Naive thymus-derived CD4-positive, alpha-beta T cell (primary cell): ENCODE measurements at regions of chr5 and their contacts with region 1.

Region 1: DNA sequence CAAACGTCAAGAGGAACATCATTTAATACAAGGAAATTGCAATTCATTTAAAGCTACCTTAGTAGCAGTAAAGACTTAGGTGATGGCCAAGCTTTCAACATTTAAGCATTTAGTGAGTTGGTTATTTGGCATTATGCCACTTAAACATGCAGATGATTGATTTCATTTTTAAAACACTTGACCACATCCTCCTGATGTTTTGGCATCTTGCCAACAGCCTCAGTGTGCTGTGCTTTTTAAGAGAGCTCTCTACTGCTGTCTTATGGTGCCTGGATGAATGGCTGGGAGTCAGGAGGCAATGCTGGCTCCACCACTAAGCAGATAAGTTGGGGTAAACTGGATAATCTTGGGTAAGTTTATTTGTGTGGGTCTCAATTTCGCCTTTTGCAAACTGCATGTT is 364.5 kb downstream of the MAN2A1 start:
- DNase-seq: peak; percentile 17 to 93 (median 85)
- ATAC-seq: peak; percentile 89
- H3K4me3 ChIP-seq: peak overlapping the region; percentile 6
- H3K4me3 Mint-ChIP-seq: peak overlapping the region; percentile 50 to 86 (median 65)
- H3K27ac ChIP-seq: peak overlapping the region; percentile 63
- H3K27ac Mint-ChIP-seq: peak overlapping the region; percentile 77 to 96 (median 90)
- H3K4me1 ChIP-seq: peaks cover 21 to 35% of the 10 kb centered on the region in 2 donors
- H3K4me1 Mint-ChIP-seq: peaks cover 10 to 50% (median 35%) of the 10 kb centered on the region in 7 donors
- H3K27me3 ChIP-seq: no peaks in the 10 kb centered on the region
- H3K27me3 Mint-ChIP-seq: no peaks in the 10 kb centered on the region

Region 2: DNA sequence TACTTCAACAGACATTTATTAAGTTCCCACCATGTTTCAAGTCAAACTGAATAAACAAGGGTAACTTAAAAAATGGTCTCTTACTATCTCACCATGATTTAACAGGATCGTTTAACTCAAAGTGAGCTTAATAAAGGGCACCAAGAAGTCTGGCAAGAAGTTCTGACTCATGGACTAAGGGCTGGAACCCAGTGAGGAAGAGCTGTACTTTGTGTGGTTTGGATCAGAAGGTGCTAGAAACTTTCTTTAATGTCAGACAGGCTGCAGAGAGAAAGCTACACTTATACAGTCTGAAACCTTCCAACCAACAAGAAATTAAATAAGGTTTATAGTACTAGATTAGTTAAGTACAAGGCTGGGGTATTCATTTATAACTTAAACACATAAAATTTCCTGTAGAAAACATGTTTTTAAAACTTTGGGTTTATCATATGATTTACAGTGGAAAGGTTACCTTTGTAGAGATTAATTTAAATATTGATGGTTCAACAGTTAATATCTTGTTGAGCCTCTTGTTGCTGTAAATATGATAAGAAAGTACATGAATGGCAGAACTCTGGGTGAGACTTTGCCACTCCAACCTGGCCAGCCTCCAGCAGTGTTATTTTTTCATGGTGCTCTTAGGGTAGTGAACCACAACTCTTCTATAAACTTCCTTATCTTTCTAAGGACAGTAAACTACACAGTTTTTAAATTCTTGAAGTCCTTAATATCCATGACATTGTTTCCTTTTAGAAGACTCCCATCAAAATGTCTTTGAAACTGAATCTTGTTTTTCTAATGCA is 201.7 kb before region 1 on chr5:
- CTCF ChIA-PET with region 1: interaction called, 3 read pairs
- POLR2A ChIA-PET with region 1: interaction called, 6 read pairs
- intact Hi-C with region 1: loop called (anchors 2 kb)
- DNase-seq: no peak
- ATAC-seq: no peak
- H3K4me3 ChIP-seq: no peak overlapping the region
- H3K4me3 Mint-ChIP-seq: peak overlapping the region in 8 of 10 donors; percentile 9 to 75 (median 23)
- H3K27ac ChIP-seq: no peak overlapping the region
- H3K27ac Mint-ChIP-seq: peak overlapping the region in 8 of 9 donors; percentile 63 to 97 (median 84)
- H3K4me1 ChIP-seq: peaks cover 61 to 71% of the 10 kb centered on the region in 2 donors
- H3K4me1 Mint-ChIP-seq: peaks cover 47 to 99% (median 91%) of the 10 kb centered on the region in 7 donors
- H3K27me3 ChIP-seq: no peaks in the 10 kb centered on the region
- H3K27me3 Mint-ChIP-seq: no peaks in the 10 kb centered on the region

Region 3: GRCh38 chr5:110726249-110727024 is 672.2 kb after region 1 on chr5 and contains the start of gene TMEM232:
- CTCF ChIA-PET with region 1: no interaction called
- POLR2A ChIA-PET with region 1: no interaction called
- intact Hi-C with region 1: loop called in 1 of 2 experiments (anchors 10 kb)
- DNase-seq: peak; percentile 40 to 85 (median 65)
- ATAC-seq: peak; percentile 99
- H3K4me3 ChIP-seq: peak within 1 kb of the TSS; percentile 59
- H3K4me3 Mint-ChIP-seq: peak within 1 kb of the TSS; percentile 73 to 97 (median 86)
- H3K27ac ChIP-seq: peak within 1 kb of the TSS; percentile 37
- H3K27ac Mint-ChIP-seq: peak within 1 kb of the TSS in 7 of 9 donors; percentile 15 to 79 (median 65)
- H3K4me1 ChIP-seq: no peaks in the 10 kb centered on the region
- H3K4me1 Mint-ChIP-seq: peaks cover 0 to 8% (median 0%) of the 10 kb centered on the region in 7 donors
- H3K27me3 ChIP-seq: no peaks in the 10 kb centered on the region
- H3K27me3 Mint-ChIP-seq: peaks cover 0 to 3% (median 0%) of the 10 kb centered on the region in 5 donors
- total RNA-seq, gene TMEM232: 1.6 to 3.0 (median 2.9) TPM